ENCODE measurements at regions of chr5 and their contacts with region 1.

Region 1: DNA sequence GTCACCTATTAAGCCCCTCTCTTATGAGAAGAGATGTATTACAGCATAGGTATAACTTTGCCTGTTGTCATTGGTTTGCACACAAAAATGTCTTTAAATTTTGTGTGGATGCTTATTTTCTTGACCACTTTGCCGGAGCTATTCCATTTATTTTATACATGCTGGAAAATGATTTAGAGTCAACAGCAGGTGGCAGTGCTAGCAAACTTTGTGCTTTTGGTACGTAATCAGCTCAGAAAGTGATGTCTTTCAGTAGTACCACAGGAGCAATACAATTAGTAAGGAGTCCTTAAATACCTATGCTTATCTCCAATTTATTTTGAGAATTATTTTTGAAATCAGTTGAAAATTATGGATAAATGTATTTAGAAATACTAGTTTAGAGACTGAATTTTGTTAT is 19.8 kb upstream of the NUDT12 start:
- DNase-seq: peak; percentile 73
- ATAC-seq: peak; percentile 68
- H3K4me3 ChIP-seq: no peak overlapping the region
- H3K27ac ChIP-seq: no peak overlapping the region
- H3K4me1 ChIP-seq: no peaks in the 10 kb centered on the region
- H3K27me3 ChIP-seq: no peaks in the 10 kb centered on the region
- CTCF ChIP-seq: peak; percentile 89

Region 2: DNA sequence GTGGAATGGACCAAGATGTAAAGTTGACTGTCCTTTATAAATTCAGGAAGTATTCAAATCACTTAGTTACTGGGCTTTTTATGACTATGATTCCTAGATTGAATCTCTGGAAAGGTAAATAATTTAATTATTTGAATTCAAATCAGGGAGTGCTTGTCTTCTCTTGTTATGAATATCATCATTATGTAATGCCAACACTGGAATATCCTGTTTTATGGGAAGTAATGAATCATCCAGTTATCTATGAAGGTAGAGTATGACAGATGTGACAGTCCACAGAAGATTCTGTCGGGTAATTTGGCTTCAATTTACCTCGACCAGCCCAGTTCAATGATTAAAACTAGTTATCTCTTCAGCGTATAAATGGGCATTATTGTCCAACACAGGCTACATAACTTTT is 121.3 kb after region 1 on chr5:
- CTCF ChIA-PET with region 1: no interaction called
- POLR2A ChIA-PET with region 1: no interaction called
- intact Hi-C with region 1: loop called (anchors 1 kb)
- DNase-seq: peak; percentile 81
- ATAC-seq: peak; percentile 83
- H3K4me3 ChIP-seq: no peak overlapping the region
- H3K27ac ChIP-seq: no peak overlapping the region
- H3K4me1 ChIP-seq: peaks cover 13% of the 10 kb centered on the region; the same call in 1 of the 2 replicates
- H3K27me3 ChIP-seq: no peaks in the 10 kb centered on the region
- CTCF ChIP-seq: no peak

Region 3: DNA sequence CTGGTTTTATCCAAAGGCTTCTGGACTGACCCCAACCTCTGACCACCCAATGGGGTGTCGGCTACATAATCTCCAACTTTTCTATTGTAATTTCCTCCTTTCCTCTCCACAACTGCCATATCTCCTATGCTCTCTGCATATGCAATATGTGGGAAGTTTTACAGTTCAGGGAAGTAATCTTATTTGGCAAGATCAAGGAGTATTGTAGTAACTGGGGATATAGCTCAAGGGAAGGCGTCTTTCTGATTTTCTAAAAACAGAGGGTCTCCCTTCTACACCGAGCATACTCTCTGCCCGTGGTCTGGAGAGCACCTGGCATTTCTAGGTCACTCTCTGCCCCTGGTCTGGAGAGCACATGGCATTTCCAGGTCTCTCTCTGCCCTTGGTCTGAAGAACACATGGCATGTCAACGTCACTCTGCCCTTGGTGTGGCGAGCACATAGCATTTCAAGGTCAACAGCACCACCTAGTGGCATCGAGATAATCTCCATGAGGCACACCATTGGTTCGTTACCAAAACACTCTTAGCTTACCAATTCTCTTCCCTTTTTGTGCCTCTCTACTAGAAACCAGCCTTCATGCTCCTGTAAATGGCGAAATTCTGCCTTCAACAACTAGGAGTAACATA is 596.6 kb after region 1 on chr5:
- CTCF ChIA-PET with region 1: interaction called, 5 read pairs
- POLR2A ChIA-PET with region 1: no interaction called
- intact Hi-C with region 1: loop called (anchors 1 kb)
- DNase-seq: peak; percentile 91
- ATAC-seq: peak; percentile 87
- H3K4me3 ChIP-seq: no peak overlapping the region
- H3K27ac ChIP-seq: no peak overlapping the region
- H3K4me1 ChIP-seq: peaks cover 1% of the 10 kb centered on the region; the same call in 1 of the 2 replicates
- H3K27me3 ChIP-seq: no peaks in the 10 kb centered on the region
- CTCF ChIP-seq: peak; percentile 86

Measured in PC-3 (cell line).